Naive thymus-derived CD4-positive, alpha-beta T cell (primary cell): ENCODE measurements at regions of chr16 and their contacts with region 1.

Region 1: GRCh38 chr16:20900299-20901067 is at the starts of genes DCUN1D3 and LYRM1:
- DNase-seq: peak; percentile 65 to 90 (median 79)
- ATAC-seq: peak; percentile 80
- H3K4me3 ChIP-seq: peak within 1 kb of the TSS; percentile 88
- H3K4me3 Mint-ChIP-seq: peak within 1 kb of the TSS; percentile 87 to 99 (median 96)
- H3K27ac ChIP-seq: peak within 1 kb of the TSS; percentile 97
- H3K27ac Mint-ChIP-seq: peak within 1 kb of the TSS; percentile 94 to 99 (median 97)
- H3K4me1 ChIP-seq: peaks cover 23 to 29% of the 10 kb centered on the region in 2 donors
- H3K4me1 Mint-ChIP-seq: peaks cover 52 to 76% (median 71%) of the 10 kb centered on the region in 7 donors
- H3K27me3 ChIP-seq: no peaks in the 10 kb centered on the region
- H3K27me3 Mint-ChIP-seq: no peaks in the 10 kb centered on the region
- total RNA-seq, gene DCUN1D3: 4.0 to 15.7 (median 6.5) TPM
- total RNA-seq, gene LYRM1: 13.4 to 29.1 (median 20.0) TPM

Region 2: GRCh38 chr16:20741554-20742285 is 158.8 kb before region 1 on chr16 and contains the start of gene THUMPD1:
- CTCF ChIA-PET with region 1: no interaction called
- POLR2A ChIA-PET with region 1: no interaction called
- intact Hi-C with region 1: loop called (anchors 1 kb)
- DNase-seq: peak; percentile 88 to 97 (median 95)
- ATAC-seq: peak; percentile 97
- H3K4me3 ChIP-seq: peak within 1 kb of the TSS; percentile 100
- H3K4me3 Mint-ChIP-seq: peak within 1 kb of the TSS; percentile 93 to 98 (median 96)
- H3K27ac ChIP-seq: peak within 1 kb of the TSS; percentile 93
- H3K27ac Mint-ChIP-seq: peak within 1 kb of the TSS; percentile 90 to 99 (median 98)
- H3K4me1 ChIP-seq: peaks cover 12 to 25% of the 10 kb centered on the region in 2 donors
- H3K4me1 Mint-ChIP-seq: peaks cover 10 to 35% (median 26%) of the 10 kb centered on the region in 7 donors
- H3K27me3 ChIP-seq: no peaks in the 10 kb centered on the region
- H3K27me3 Mint-ChIP-seq: peaks cover 0 to 2% (median 0%) of the 10 kb centered on the region in 5 donors
- total RNA-seq, gene THUMPD1: 41.9 to 107 (median 72.5) TPM

Region 3: GRCh38 chr16:20826039-20826566 is 74.4 kb before region 1 on chr16:
- CTCF ChIA-PET with region 1: no interaction called
- POLR2A ChIA-PET with region 1: no interaction called
- intact Hi-C with region 1: no loop called
- DNase-seq: no peak
- ATAC-seq: no peak
- H3K4me3 ChIP-seq: no peak overlapping the region
- H3K4me3 Mint-ChIP-seq: no peak overlapping the region
- H3K27ac ChIP-seq: no peak overlapping the region
- H3K27ac Mint-ChIP-seq: no peak overlapping the region
- H3K4me1 ChIP-seq: no peaks in the 10 kb centered on the region
- H3K4me1 Mint-ChIP-seq: peaks cover 0 to 18% (median 5%) of the 10 kb centered on the region in 7 donors
- H3K27me3 ChIP-seq: no peaks in the 10 kb centered on the region
- H3K27me3 Mint-ChIP-seq: no peaks in the 10 kb centered on the region

Region 4: DNA sequence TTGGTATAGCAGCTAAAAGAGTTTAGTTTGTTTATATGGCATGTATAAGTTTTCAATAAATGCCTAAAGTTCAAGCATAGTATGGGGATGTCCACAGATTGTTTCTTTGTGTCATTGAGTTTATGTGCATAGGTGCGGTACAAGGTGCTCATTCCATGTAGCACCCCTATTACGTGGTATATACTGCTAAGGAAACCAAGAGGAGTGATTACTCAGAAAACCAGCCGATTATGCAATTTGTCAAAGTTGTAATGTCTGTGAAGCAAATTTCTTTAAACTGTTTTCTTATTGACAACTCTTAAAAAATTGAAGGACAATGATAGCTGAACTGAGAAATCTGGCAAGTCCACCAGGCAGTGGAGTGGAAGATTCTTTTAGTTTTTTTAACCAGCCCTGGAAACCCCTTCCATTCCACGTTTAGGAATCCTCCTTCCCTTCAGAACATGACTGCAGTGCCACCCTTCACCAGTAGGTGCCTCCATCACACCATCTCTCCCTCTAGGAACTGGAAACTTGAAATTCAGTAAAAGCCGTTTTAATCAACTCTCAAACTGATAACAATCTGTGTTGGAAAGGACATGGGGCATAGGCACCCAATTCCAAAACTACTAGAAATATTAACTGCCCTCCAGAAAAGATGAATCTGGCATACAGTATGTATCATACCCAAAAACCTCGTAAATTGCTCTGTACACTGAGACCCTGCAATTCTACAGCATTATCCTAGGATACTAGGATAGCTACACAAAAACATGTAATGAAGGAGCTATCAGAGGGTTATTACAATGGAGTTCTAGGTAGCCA is 50.7 kb before region 1 on chr16:
- CTCF ChIA-PET with region 1: interaction called, 5 read pairs
- POLR2A ChIA-PET with region 1: interaction called, 3 read pairs
- intact Hi-C with region 1: loop called in 1 of 2 experiments (anchors 2 kb)
- DNase-seq: peak; percentile 30 to 71 (median 54)
- ATAC-seq: peak; percentile 82
- H3K4me3 ChIP-seq: no peak overlapping the region
- H3K4me3 Mint-ChIP-seq: no peak overlapping the region
- H3K27ac ChIP-seq: no peak overlapping the region
- H3K27ac Mint-ChIP-seq: peak overlapping the region in 1 of 9 donors; percentile 41
- H3K4me1 ChIP-seq: peaks cover 5 to 7% of the 10 kb centered on the region in 2 donors
- H3K4me1 Mint-ChIP-seq: peaks cover 6 to 37% (median 12%) of the 10 kb centered on the region in 7 donors
- H3K27me3 ChIP-seq: no peaks in the 10 kb centered on the region
- H3K27me3 Mint-ChIP-seq: no peaks in the 10 kb centered on the region

Region 5: DNA sequence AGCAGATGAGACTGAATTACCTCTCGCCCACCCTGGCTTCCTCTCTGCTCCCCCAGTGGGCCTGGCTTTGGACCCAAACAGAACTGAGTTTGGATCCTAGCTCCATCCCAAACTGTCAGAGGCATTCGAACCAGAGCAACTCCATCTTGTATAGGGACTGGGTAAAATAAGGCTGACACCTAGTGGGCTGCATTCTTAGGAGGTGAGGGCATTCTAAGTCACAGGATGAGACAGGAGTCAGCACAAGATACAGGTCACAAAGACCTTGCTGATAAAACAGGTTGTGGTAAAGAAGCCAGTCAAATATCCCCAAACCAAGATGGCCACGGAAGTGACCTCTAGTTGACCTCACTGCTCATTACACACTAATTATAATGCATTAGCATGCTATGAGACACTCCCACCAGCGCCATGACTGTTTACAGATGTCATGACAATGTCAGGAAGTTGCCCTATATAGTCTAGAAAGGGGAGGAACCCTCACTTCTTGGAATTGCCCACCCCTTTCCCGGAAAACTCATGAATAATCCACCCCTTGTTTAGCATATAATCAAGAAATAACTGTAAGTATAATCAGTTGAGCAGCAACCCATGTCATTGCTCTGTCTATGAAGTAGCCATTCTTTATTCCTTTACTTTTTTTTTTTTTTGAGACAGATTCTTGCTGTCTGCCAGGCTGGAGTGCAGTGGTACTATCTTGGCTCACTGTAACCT is 44.5 kb after region 1 on chr16:
- CTCF ChIA-PET with region 1: no interaction called
- POLR2A ChIA-PET with region 1: no interaction called
- intact Hi-C with region 1: loop called in 1 of 2 experiments (anchors 1 kb)
- DNase-seq: peak in 5 of 9 donors; percentile 3 to 32 (median 4)
- ATAC-seq: peak; percentile 74
- H3K4me3 ChIP-seq: no peak overlapping the region
- H3K4me3 Mint-ChIP-seq: no peak overlapping the region
- H3K27ac ChIP-seq: no peak overlapping the region
- H3K27ac Mint-ChIP-seq: peak overlapping the region in 1 of 9 donors; percentile 64
- H3K4me1 ChIP-seq: no peaks in the 10 kb centered on the region
- H3K4me1 Mint-ChIP-seq: peaks cover 0 to 42% (median 5%) of the 10 kb centered on the region in 7 donors
- H3K27me3 ChIP-seq: no peaks in the 10 kb centered on the region
- H3K27me3 Mint-ChIP-seq: peaks cover 0 to 8% (median 0%) of the 10 kb centered on the region in 5 donors

Region 6: DNA sequence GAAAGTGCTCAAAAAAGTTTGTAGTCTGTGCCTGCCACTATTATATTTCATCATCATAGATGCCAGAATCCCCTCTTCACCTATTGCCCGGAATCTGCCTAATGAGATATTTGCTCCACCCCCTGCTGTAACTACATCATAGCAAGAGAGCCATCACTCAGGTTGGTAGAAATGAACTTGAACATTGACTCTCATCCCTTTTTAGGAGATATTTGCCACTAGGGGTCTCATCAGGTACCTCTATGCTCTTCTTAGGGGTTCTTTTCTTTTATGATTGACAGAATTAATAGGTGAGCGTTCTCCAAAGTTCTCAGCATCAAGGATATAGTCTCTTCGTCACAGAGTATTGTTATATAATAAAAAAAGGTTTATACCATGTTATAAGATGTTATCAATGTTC is 353.0 kb after region 1 on chr16:
- CTCF ChIA-PET with region 1: no interaction called
- POLR2A ChIA-PET with region 1: no interaction called
- intact Hi-C with region 1: no loop called
- DNase-seq: no peak
- ATAC-seq: no peak
- H3K4me3 ChIP-seq: no peak overlapping the region
- H3K4me3 Mint-ChIP-seq: no peak overlapping the region
- H3K27ac ChIP-seq: no peak overlapping the region
- H3K27ac Mint-ChIP-seq: no peak overlapping the region
- H3K4me1 ChIP-seq: no peaks in the 10 kb centered on the region
- H3K4me1 Mint-ChIP-seq: no peaks in the 10 kb centered on the region
- H3K27me3 ChIP-seq: no peaks in the 10 kb centered on the region
- H3K27me3 Mint-ChIP-seq: peaks cover 14 to 41% (median 15%) of the 10 kb centered on the region in 5 donors

Region 7: DNA sequence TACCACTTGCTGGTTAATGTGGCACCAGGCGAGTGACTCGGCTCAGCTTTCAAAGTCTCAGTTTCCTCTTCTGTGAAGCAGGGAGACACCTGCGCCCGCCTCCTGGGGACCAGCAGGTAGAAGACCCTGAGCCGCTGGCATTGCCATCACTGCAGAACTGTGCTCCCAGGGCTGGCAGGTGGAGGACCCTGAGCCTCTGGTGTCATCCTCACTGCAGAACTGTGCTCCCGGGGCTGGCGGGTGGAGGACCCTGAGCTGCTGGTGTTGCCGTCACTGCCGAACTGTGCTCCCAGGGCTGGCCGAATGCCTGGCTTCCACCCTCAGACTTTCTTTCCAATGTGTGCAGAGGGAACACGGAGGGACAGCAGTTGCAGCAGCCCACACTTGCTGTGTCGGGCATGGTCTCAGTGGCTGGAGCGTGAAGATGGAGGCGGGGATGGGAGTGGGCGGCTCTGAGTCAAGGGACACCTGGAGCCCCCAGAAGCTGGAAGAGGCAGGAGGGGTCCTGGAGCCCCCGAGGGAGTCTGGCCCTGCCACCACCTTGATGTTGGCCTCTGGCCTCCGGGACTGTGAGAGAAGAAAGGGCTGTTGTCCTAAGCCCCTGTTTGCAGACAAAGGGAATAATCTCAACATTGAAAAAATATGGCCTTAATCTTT is 623.1 kb after region 1 on chr16:
- CTCF ChIA-PET with region 1: no interaction called
- POLR2A ChIA-PET with region 1: no interaction called
- intact Hi-C with region 1: loop called in 1 of 2 experiments (anchors 10 kb)
- DNase-seq: no peak
- ATAC-seq: no peak
- H3K4me3 ChIP-seq: no peak overlapping the region
- H3K4me3 Mint-ChIP-seq: peak overlapping the region in 2 of 10 donors; percentile 29 to 56
- H3K27ac ChIP-seq: no peak overlapping the region
- H3K27ac Mint-ChIP-seq: no peak overlapping the region
- H3K4me1 ChIP-seq: no peaks in the 10 kb centered on the region
- H3K4me1 Mint-ChIP-seq: peaks cover 2 to 9% (median 6%) of the 10 kb centered on the region in 7 donors
- H3K27me3 ChIP-seq: no peaks in the 10 kb centered on the region
- H3K27me3 Mint-ChIP-seq: peaks cover 0 to 7% (median 0%) of the 10 kb centered on the region in 5 donors